ENCODE measurements at regions of chr15 and their contacts with region 1.

Region 1: DNA sequence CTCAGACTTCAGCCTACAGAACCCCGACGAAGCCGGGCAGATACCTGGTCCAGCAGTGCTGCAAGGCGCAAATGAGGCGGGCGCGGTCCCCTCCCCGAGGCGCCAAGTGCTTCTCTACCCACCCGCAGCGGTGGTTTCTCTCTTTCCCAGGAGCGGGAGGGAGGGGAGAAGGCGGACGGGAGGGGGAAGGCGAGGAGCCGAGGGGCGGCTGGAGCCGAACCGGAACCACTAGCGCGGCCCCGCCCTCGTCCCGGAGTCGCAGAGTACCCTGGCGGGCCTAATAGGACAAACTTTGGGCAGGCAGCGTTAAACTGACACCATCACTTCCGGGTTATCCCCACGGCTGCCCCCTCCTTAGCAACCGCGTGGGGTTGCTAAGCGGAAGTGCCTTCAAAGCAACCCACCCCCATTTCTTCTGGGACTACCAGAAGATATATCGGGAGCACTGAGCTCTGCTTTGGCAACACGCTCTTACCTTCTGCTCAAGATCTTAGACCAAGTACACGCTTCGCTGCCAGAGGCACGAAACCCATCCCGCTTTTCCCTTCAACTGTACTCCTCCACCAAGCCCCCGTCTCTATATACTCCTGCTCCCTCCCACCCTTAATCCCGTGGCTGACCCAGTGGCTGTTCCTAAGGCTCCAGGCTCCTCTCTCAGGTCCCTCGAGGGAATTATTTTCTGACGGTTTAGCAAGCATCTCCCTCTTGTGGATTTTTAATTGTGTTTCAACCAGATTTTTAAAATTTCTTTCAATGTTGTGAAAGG is at the start of gene CSNK1G1:
- DNase-seq: peak; percentile 94
- H3K4me3 Mint-ChIP-seq: peak within 1 kb of the TSS; percentile 90
- H3K27ac Mint-ChIP-seq: peak within 1 kb of the TSS; percentile 88
- H3K4me1 Mint-ChIP-seq: peaks cover 16% of the 10 kb centered on the region
- H3K27me3 Mint-ChIP-seq: no peaks in the 10 kb centered on the region
- total RNA-seq, gene CSNK1G1: 17.5 to 20.9 TPM

Region 2: GRCh38 chr15:64162870-64163658 is 193.1 kb before region 1 on chr15 and contains the start of gene PPIB:
- CTCF ChIA-PET with region 1: interaction called, 3 read pairs
- POLR2A ChIA-PET with region 1: no interaction called
- intact Hi-C with region 1: loop called (anchors 1 kb)
- DNase-seq: peak; percentile 98
- H3K4me3 Mint-ChIP-seq: peak within 1 kb of the TSS; percentile 88
- H3K27ac Mint-ChIP-seq: peak within 1 kb of the TSS; percentile 94
- H3K4me1 Mint-ChIP-seq: peaks cover 43% of the 10 kb centered on the region
- H3K27me3 Mint-ChIP-seq: no peaks in the 10 kb centered on the region
- total RNA-seq, gene PPIB: 277 to 283 TPM

Region 3: GRCh38 chr15:64387562-64388168 is 31.5 kb after region 1 on chr15 and contains the start of gene TRIP4:
- CTCF ChIA-PET with region 1: interaction called, 3 read pairs
- POLR2A ChIA-PET with region 1: no interaction called
- intact Hi-C with region 1: loop called (anchors 1 kb)
- DNase-seq: peak; percentile 98
- H3K4me3 Mint-ChIP-seq: peak within 1 kb of the TSS; percentile 97
- H3K27ac Mint-ChIP-seq: peak within 1 kb of the TSS; percentile 85
- H3K4me1 Mint-ChIP-seq: peaks cover 16% of the 10 kb centered on the region
- H3K27me3 Mint-ChIP-seq: no peaks in the 10 kb centered on the region
- total RNA-seq, gene TRIP4: 21.7 to 22.2 TPM

Region 4: GRCh38 chr15:64412216-64412615 is 56.1 kb after region 1 on chr15:
- CTCF ChIA-PET with region 1: no interaction called
- POLR2A ChIA-PET with region 1: no interaction called
- intact Hi-C with region 1: no loop called
- DNase-seq: no peak
- H3K4me3 Mint-ChIP-seq: no peak overlapping the region
- H3K27ac Mint-ChIP-seq: no peak overlapping the region
- H3K4me1 Mint-ChIP-seq: no peaks in the 10 kb centered on the region
- H3K27me3 Mint-ChIP-seq: no peaks in the 10 kb centered on the region

Measured in activated CD4-positive, alpha-beta memory T cell treated with anti-CD3 and anti-CD28 coated beads for 36 hours (primary cell).